Thyroid gland (tissue), 4 donors: ENCODE measurements at regions of chr11 and their contacts with region 1.

Region 1: GRCh38 chr11:2930704-2931428 is 1.6 kb upstream of the PHLDA2 start:
- DNase-seq: peak; percentile 93 to 95
- H3K4me3 ChIP-seq: peak overlapping the region in 1 of 3 donors; percentile 52
- H3K27ac ChIP-seq: peak overlapping the region in 1 of 3 donors; percentile 70
- H3K4me1 ChIP-seq: peaks cover 18 to 30% of the 10 kb centered on the region in 2 donors
- H3K27me3 ChIP-seq: no peaks in the 10 kb centered on the region
- CTCF ChIP-seq: peak; percentile 76 to 99 (median 93)
- POLR2A ChIP-seq: peak in 1 of 2 donors; percentile 17

Region 2: GRCh38 chr11:3091791-3092602 is 161.1 kb after region 1 on chr11:
- intact Hi-C with region 1: loop called (anchors 5 kb)
- DNase-seq: peak; percentile 71 to 72
- H3K4me3 ChIP-seq: no peak overlapping the region
- H3K27ac ChIP-seq: no peak overlapping the region
- H3K4me1 ChIP-seq: peaks cover 0 to 13% of the 10 kb centered on the region in 2 donors
- H3K27me3 ChIP-seq: no peaks in the 10 kb centered on the region
- CTCF ChIP-seq: peak; percentile 96 to 100 (median 99)
- POLR2A ChIP-seq: no peak